ENCODE measurements at regions of chr6 and their contacts with region 1.

Region 1: DNA sequence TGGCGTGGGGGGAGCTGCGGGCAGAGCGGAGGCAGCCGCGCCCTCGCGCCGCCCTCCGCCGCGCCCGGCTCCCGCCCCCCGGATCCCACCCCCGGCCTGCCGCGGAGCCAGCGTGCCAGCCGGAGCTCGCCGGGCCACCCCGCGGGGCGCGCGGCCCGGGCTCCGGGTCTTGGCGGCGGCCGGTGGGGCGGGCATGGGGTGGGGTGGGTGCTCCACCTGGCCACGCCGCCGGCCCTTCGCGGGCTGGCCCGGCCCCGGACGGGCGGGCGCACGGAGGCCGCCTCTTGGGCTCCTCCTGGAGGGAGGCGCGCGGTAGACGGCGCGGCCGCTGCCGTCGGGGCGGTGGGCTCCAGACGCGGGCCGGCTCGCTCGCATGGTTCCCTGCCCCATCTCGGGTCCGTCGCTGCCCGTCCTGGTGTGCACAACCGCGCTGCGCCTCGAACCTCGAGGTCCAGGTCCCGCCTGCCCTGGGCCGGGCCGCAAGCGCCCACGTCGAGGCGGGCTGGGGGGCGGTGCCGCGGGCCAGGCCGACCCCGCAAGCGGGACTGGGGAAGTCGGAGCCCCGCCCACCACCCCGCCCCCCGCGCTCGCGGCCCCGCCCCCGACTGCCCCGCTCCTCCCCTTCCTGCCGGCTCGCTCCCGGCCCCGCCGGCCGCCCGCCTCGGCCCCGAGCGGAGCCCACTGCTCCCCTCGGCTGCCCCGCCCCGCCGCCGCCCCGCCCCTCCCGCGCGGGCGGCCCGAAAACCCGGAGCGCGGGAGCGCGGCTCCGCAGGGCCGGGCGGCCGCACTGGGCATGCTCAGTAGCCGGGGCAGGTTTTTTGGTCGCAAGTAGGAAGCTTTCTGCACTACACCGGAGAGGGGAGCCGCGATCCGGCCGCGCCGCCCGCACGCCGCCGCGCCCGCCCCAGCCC is at the start of gene CDYL:
- DNase-seq: peak; percentile 89 to 95 (median 91)
- ATAC-seq: peak; percentile 86 to 93 (median 90)
- H3K4me3 ChIP-seq: peak within 1 kb of the TSS; percentile 40 to 91 (median 73)
- H3K27ac ChIP-seq: peak within 1 kb of the TSS in 11 of 12 donors; percentile 65 to 90 (median 84)
- H3K4me1 ChIP-seq: peaks cover 0 to 34% (median 18%) of the 10 kb centered on the region in 12 donors
- H3K27me3 ChIP-seq: no peaks in the 10 kb centered on the region
- CTCF ChIP-seq: peak in 9 of 12 donors; percentile 6 to 56 (median 41)
- POLR2A ChIP-seq: no peak
- total RNA-seq, gene CDYL: 14.6 to 45.2 (median 31.4) TPM

Region 2: DNA sequence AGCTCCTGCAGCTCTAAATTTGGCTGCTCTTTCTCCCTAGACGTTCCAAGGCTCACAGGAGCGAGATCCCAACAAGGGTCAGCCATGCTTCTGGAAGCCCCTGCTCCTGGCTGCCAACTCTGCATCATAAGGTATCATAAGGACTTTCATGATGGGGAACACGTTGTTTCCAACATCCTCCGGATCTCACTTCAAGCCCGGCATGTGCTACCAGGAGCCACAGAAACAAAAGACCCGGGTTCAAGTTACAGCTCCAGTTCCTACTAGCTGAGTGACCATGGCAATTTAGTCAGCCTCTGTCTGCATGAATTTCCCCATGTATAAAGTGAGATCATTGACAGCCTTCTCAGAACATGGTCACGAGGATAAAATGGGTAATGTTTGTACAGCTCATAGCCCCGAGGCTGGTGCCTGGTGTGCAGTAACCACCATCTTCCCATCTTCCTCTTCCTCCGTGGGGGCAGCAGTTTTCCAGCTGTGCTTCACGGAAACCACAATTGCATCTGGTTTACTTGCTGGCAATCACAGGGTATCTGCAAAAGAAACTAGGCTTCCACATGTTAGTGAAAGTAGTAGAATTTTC is 431.4 kb before region 1 on chr6:
- intact Hi-C with region 1: loop called in 1 of 10 experiments (anchors 10 kb)
- DNase-seq: no peak
- ATAC-seq: no peak
- H3K4me3 ChIP-seq: peak overlapping the region in 9 of 12 donors; percentile 48 to 62 (median 55)
- H3K27ac ChIP-seq: peak overlapping the region in 10 of 12 donors; percentile 19 to 93 (median 84)
- H3K4me1 ChIP-seq: peaks cover 0 to 26% (median 5%) of the 10 kb centered on the region in 12 donors
- H3K27me3 ChIP-seq: no peaks in the 10 kb centered on the region
- CTCF ChIP-seq: no peak
- POLR2A ChIP-seq: no peak

Region 3: DNA sequence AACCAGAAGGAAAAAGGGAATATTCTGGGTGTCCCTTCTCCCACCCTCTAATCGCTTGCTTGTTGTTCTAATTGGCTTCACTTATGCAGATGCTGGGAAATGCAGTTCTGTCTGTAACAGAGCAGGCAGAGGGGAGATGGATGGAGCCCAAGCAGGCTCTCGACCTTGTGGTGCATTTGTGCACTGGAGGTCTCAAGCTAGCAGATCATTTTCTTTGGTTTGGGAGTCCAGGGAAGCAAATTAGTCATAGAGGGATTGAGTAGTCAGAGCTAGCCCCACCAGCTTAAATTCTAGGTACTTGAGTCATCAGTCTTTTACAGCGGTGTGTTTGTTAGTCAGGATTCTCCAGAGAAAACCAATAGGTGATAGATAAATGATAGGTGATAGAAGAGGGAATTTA is 405.8 kb before region 1 on chr6:
- intact Hi-C with region 1: loop called in 1 of 10 experiments (anchors 10 kb)
- DNase-seq: no peak
- ATAC-seq: no peak
- H3K4me3 ChIP-seq: no peak overlapping the region
- H3K27ac ChIP-seq: peak overlapping the region in 11 of 12 donors; percentile 51 to 92 (median 69)
- H3K4me1 ChIP-seq: peaks cover 2 to 48% (median 23%) of the 10 kb centered on the region in 12 donors
- H3K27me3 ChIP-seq: no peaks in the 10 kb centered on the region
- CTCF ChIP-seq: no peak
- POLR2A ChIP-seq: no peak

Region 4: GRCh38 chr6:4936681-4937041 is 160.8 kb after region 1 on chr6:
- intact Hi-C with region 1: loop called in 6 of 10 experiments (anchors 2 to 10 kb)
- DNase-seq: no peak
- ATAC-seq: peak in 2 of 4 donors; percentile 33 to 52
- H3K4me3 ChIP-seq: no peak overlapping the region
- H3K27ac ChIP-seq: no peak overlapping the region
- H3K4me1 ChIP-seq: peaks cover 0 to 33% (median 14%) of the 10 kb centered on the region in 12 donors
- H3K27me3 ChIP-seq: no peaks in the 10 kb centered on the region
- CTCF ChIP-seq: peak; percentile 45 to 78 (median 65)
- POLR2A ChIP-seq: no peak